Transverse colon (tissue), 4 donors: ENCODE measurements at regions of chr5 and their contacts with region 1.

Region 1: DNA sequence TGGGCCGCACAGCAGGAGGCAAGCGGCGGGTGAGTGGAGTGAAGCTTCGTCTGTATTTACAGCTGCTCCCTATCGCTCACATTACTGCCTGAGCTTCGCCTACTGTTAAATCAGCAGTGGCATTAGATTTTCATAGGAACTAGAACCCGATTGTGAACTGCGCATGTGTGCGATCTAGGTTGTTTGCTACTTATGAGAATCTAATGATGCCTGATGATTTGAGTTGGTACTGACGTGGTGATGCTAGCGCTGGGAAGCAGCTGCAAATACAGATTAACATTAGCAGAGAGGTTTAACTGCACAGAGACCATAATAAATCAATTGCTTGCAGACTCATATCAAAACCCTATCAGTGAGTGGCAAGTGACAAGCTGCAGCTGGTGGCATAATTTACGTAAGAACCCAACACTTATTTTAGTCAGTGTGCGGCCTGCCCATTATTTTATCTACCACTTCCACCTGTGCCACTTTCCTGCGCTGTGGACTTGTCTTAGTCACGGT is 133.4 kb upstream of the CDH9 start:
- DNase-seq: no peak
- H3K4me3 ChIP-seq: no peak overlapping the region
- H3K27ac ChIP-seq: no peak overlapping the region
- H3K4me1 ChIP-seq: no peaks in the 10 kb centered on the region
- H3K27me3 ChIP-seq: no peaks in the 10 kb centered on the region
- CTCF ChIP-seq: no peak
- EP300 ChIP-seq: no peak
- POLR2A ChIP-seq: no peak

Region 2: DNA sequence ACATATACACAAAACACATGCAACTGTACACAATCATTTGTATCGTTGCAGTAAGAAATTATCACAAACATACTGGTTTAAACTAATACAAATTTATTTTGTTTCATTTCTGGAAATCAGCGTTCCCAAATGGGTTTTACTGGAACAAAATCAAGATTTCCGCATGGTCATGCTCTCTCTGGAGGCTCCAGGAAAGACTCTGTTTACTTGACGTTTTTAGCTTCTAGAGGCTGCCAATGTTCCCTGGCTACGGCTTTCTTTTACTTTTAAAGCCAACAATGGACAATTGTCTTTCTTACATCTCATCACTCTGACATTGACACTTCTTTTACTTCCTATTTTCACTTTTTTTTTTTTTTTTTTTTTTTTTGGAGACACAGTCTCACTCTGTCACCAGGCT is 926.5 kb before region 1 on chr5:
- in situ Hi-C with region 1: no loop called
- intact Hi-C with region 1: loop called (anchors 5 kb)
- DNase-seq: no peak
- H3K4me3 ChIP-seq: no peak overlapping the region
- H3K27ac ChIP-seq: no peak overlapping the region
- H3K4me1 ChIP-seq: no peaks in the 10 kb centered on the region
- H3K27me3 ChIP-seq: no peaks in the 10 kb centered on the region
- CTCF ChIP-seq: no peak
- EP300 ChIP-seq: no peak
- POLR2A ChIP-seq: no peak